ENCODE measurements at regions of chr2 and their contacts with region 1.

Region 1: DNA sequence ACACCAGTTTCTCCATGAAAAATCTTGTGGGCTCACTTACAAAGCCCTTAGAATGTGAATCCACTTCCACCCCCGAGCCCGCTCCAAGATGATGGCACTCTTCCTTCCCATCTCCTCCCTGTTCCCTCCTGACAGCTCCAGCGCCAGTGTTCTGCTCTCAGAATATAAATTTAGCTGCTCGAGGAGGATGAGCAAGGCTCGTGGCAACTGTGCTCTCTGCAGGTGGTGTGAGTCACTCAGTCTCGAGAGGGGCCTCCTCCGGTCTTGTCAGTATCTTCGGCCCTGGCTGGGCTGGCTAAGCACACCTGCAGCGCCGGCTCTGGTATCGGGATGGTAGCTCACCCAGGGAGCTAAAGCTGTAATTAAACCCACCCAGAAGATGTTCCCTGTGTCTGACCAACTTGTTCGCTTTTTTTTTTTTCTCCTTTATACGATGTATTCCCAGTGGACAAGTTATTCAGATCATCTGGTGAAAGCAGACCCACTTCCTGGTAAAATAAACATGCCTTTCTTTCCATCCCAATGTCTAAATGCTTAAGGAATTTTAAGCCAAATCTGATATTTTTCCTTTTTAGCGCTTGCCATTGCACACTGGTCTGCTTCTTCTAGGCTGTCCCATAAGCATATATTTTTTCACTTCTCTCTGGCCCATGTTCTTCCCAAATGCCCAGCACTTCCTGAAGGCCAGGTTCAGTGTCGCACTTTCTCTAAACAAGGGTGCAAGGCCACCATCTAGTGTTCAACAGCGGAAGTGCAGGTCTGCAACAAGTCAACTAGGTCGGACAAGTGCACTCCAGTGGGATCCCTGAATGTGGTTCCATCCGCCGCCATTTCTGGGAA is 31.4 kb upstream of the YPEL5 start:
- DNase-seq: peak; percentile 77 to 82
- H3K4me3 ChIP-seq: no peak overlapping the region
- H3K4me3 Mint-ChIP-seq: no peak overlapping the region
- H3K27ac Mint-ChIP-seq: no peak overlapping the region
- H3K4me1 ChIP-seq: no peaks in the 10 kb centered on the region
- H3K4me1 Mint-ChIP-seq: no peaks in the 10 kb centered on the region
- H3K27me3 ChIP-seq: no peaks in the 10 kb centered on the region
- H3K27me3 Mint-ChIP-seq: peaks cover 12% of the 10 kb centered on the region
- CTCF ChIP-seq: peak; percentile 87 to 94

Region 2: GRCh38 chr2:30026087-30027055 is 89.0 kb before region 1 on chr2:
- CTCF ChIA-PET with region 1: no interaction called
- POLR2A ChIA-PET with region 1: no interaction called
- intact Hi-C with region 1: loop called (anchors 1 kb)
- DNase-seq: peak; percentile 64 to 65
- H3K4me3 ChIP-seq: no peak overlapping the region
- H3K4me3 Mint-ChIP-seq: no peak overlapping the region
- H3K27ac Mint-ChIP-seq: no peak overlapping the region
- H3K4me1 ChIP-seq: no peaks in the 10 kb centered on the region
- H3K4me1 Mint-ChIP-seq: no peaks in the 10 kb centered on the region
- H3K27me3 ChIP-seq: peaks cover 1% of the 10 kb centered on the region
- H3K27me3 Mint-ChIP-seq: peaks cover 21% of the 10 kb centered on the region
- CTCF ChIP-seq: peak; percentile 81 to 91

Region 3: DNA sequence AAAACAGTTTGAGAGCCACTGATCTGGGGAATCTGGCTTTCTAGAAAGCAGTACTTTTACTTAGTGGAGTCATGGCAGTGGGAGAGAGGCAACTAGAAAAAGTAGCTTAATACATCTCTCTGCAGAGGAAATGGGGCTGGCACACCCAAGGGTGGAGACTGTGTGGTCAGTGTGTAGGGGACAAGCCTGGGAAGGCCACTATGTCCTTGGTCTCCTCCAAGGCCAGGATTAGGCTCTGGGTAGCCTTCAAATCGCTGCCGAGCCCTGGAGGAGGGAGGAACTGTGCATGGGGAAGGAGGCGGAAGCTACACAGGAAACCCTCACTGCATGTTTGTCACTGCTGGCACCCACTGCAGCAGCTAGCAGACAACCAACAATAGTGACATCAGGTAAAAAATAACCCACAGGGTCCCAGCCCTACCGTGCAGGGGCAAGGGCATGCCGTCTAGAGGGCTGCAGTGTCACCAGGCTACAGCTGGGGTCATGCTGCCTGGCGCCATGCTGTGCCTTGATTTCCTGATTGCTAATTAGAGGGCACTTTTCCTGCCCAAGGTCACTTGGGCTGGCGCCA is 150.8 kb after region 1 on chr2:
- CTCF ChIA-PET with region 1: no interaction called
- POLR2A ChIA-PET with region 1: no interaction called
- intact Hi-C with region 1: no loop called
- DNase-seq: no peak
- H3K4me3 ChIP-seq: no peak overlapping the region
- H3K4me3 Mint-ChIP-seq: no peak overlapping the region
- H3K27ac Mint-ChIP-seq: no peak overlapping the region
- H3K4me1 ChIP-seq: peaks cover 8% of the 10 kb centered on the region
- H3K4me1 Mint-ChIP-seq: peaks cover 18% of the 10 kb centered on the region
- H3K27me3 ChIP-seq: no peaks in the 10 kb centered on the region
- H3K27me3 Mint-ChIP-seq: no peaks in the 10 kb centered on the region
- CTCF ChIP-seq: no peak